IMR-90 (cell line): ENCODE measurements at regions of chr19 and their contacts with region 1.

Region 1: GRCh38 chr19:36915992-36916830 is at the starts of genes ZNF568 and ZNF829:
- DNase-seq: peak; percentile 83
- ATAC-seq: peak; percentile 97
- H3K4me3 ChIP-seq: peak within 1 kb of the TSS; percentile 87
- H3K27ac ChIP-seq: peak within 1 kb of the TSS; percentile 98
- H3K4me1 ChIP-seq: no peaks in the 10 kb centered on the region
- H3K27me3 ChIP-seq: no peaks in the 10 kb centered on the region
- CTCF ChIP-seq: peak; percentile 63
- POLR2A ChIP-seq: 0 out of 2 replicates have a peak, but pooled peaks have one; percentile 18
- RAD21 ChIP-seq: peak; percentile 46; the same call in 1 of the 2 replicates
- total RNA-seq, gene ZNF568: 7.3 and 10.6 TPM in 2 replicates
- total RNA-seq, gene ZNF829: 3.0 and 3.3 TPM in 2 replicates

Region 2: GRCh38 chr19:36962346-36962745 is 46.1 kb after region 1 on chr19:
- CTCF ChIA-PET with region 1: no interaction called
- POLR2A ChIA-PET with region 1: no interaction called
- dilution Hi-C with region 1: no loop called
- in situ Hi-C with region 1: no loop called
- intact Hi-C with region 1: no loop called
- DNase-seq: no peak
- ATAC-seq: no peak
- H3K4me3 ChIP-seq: no peak overlapping the region
- H3K27ac ChIP-seq: no peak overlapping the region
- H3K4me1 ChIP-seq: no peaks in the 10 kb centered on the region
- H3K27me3 ChIP-seq: no peaks in the 10 kb centered on the region
- CTCF ChIP-seq: no peak
- POLR2A ChIP-seq: no peak
- RAD21 ChIP-seq: no peak

Region 3: DNA sequence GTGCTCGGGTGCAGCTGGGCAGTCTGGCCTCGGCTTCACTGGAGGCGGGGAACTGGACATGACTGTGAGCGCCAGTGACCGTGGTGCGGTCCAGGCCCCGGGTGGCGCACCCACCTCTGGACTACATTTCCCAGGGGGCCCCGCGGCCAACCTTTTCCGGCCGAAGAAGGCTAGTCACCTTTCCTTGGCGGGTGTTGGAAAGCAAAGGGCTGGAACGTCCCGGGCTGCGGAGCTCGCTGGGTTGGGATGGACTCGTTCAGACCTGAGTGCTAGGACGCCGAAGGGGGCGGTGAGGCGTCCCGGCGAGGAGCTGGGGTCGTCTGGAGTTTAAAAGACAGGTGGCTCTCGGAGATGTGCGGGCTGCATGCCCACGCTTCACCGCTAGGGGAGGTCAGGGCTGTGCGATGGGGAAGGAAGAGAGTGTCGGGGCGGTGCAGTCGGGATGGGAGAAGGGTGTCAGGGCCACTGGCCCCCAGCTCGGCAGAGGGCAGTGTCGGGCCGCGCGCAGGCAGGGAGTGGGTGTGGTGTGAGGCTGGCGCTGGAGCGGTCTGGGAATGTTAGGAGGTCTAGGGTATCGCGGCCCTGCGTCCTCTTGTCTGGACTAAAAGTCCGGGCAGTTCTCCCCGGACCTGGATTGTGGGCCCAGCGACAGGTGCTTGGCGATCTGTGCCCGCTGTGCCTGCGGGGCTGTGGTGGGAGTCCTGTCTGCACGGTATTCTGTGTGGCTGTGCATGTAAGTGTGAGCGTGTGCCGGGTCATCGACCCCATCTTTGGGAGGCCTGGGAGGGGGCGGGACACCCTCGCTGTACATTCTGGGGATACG is 57.0 kb after region 1 on chr19:
- CTCF ChIA-PET with region 1: no interaction called
- POLR2A ChIA-PET with region 1: no interaction called
- dilution Hi-C with region 1: no loop called
- in situ Hi-C with region 1: no loop called
- intact Hi-C with region 1: loop called (anchors 1 kb)
- DNase-seq: peak; percentile 50
- ATAC-seq: peak; percentile 97
- H3K4me3 ChIP-seq: peak overlapping the region; percentile 96
- H3K27ac ChIP-seq: peak overlapping the region; percentile 75
- H3K4me1 ChIP-seq: no peaks in the 10 kb centered on the region; the same call in 1 of the 2 replicates
- H3K27me3 ChIP-seq: no peaks in the 10 kb centered on the region
- CTCF ChIP-seq: peak; percentile 54
- POLR2A ChIP-seq: no peak
- RAD21 ChIP-seq: peak; percentile 48